Activated CD4-positive, alpha-beta memory T cell treated with anti-CD3 and anti-CD28 coated beads for 36 hours (primary cell): ENCODE measurements at regions of chr9 and their contacts with region 1.

Region 1: DNA sequence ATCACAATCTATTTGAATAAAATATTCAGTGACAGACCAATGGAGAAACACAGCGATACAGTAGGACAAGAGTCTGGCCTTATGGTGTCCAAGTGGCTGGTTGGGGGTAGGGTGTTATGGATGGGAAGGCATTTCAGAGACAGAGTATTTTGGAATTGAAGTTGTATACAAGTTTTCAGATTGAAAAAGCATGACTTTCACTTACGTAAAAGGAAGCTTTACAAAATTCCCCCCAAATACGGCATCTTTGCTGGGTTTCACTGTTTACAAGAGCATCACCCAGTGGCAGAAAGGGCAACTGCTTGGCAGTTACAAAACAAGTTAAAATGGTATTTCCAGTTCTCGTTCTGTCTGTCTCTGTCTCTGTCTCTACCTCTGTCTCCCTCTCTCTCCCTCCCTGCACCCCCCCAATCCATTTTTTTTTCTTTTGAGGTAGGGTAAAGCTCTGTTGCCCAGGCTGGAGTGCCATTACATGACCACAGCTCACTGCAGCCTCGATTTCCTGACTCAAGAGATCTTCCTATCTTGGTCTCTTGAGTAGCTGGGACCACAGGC is 86.2 kb downstream of the PTPN3 start:
- DNase-seq: peak; percentile 63
- H3K4me3 Mint-ChIP-seq: no peak overlapping the region
- H3K27ac Mint-ChIP-seq: peak overlapping the region; percentile 77
- H3K4me1 Mint-ChIP-seq: peaks cover 36% of the 10 kb centered on the region
- H3K27me3 Mint-ChIP-seq: peaks cover 21% of the 10 kb centered on the region

Region 2: DNA sequence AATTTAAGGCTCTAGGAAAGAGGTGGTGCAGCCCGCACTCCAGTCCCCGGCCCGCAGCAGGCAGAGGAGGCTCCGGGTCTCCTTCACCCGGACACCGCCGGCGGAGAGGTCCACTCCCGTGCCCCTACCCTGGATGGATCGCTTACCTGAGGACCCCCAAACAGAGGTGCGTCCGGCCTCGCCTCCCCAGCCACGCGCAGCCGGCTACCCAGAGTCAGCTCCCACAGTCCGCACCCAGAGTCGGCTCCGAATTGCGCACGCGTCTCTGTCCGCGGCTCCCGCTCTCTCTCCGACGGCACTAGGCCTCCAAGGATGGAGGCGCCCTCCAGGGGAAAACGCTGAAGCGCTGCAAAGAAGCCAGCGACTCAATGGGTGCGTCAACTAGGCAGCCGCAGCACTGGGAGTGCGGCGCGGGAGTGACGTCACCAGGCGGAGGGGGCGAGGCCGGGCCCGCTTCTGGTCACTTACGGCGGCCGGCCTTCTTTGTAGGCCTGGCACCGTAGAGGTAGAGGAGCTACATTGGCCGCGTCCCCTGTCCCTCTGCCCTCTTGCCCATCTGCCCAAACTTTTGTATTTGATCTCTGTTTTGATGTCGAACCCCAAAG is 478.1 kb before region 1 on chr9 and contains the start of gene ELP1:
- CTCF ChIA-PET with region 1: no interaction called
- POLR2A ChIA-PET with region 1: no interaction called
- intact Hi-C with region 1: loop called (anchors 10 kb)
- DNase-seq: peak; percentile 95
- H3K4me3 Mint-ChIP-seq: peak within 1 kb of the TSS; percentile 95
- H3K27ac Mint-ChIP-seq: peak within 1 kb of the TSS; percentile 92
- H3K4me1 Mint-ChIP-seq: peaks cover 25% of the 10 kb centered on the region
- H3K27me3 Mint-ChIP-seq: no peaks in the 10 kb centered on the region
- total RNA-seq, gene ELP1: 25.5 to 29.2 TPM

Region 3: DNA sequence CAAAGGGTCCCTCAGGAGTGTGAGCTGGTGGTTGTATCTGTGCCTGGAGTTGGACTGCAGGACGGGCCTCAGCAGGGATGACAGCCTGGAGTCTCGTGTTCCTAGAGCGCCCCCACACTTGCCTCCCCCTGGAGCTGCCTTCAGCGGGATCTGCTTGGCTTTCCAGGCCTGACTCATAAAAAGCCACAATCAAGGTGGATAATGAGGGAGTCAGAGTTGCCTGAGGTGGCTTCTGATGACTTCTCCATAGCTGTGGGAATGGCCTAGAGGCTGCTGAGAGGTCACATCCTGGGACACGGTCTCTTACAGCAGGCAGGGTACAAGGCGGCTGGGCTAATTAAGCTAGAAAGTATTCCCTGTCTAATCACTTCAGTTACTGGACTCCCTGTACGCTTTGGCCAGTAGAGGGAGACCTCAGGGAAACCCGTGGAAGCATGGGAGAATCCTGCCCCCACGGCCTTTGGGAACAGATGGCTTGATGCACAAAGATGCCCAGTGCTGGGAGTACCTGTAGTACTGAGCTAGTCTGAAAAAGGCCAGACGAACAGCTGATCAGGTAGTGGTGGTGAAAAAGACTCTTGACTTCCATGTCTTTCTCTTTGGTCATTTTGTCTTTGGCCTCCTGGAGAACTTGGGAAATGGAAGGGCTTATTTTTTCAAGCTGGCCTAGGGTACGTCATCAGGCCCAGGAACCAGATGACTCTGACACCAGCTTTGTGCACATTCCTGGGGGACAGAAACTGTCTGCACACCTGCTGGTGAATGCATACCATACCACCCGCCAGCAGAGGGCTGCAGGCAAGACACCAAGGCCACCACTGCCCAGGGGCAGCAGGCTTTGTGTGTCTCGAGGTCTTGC is 228.7 kb before region 1 on chr9:
- CTCF ChIA-PET with region 1: no interaction called
- POLR2A ChIA-PET with region 1: no interaction called
- intact Hi-C with region 1: loop called (anchors 5 kb)
- DNase-seq: peak; percentile 24
- H3K4me3 Mint-ChIP-seq: no peak overlapping the region
- H3K27ac Mint-ChIP-seq: no peak overlapping the region
- H3K4me1 Mint-ChIP-seq: peaks cover 11% of the 10 kb centered on the region
- H3K27me3 Mint-ChIP-seq: peaks cover 7% of the 10 kb centered on the region

Region 4: DNA sequence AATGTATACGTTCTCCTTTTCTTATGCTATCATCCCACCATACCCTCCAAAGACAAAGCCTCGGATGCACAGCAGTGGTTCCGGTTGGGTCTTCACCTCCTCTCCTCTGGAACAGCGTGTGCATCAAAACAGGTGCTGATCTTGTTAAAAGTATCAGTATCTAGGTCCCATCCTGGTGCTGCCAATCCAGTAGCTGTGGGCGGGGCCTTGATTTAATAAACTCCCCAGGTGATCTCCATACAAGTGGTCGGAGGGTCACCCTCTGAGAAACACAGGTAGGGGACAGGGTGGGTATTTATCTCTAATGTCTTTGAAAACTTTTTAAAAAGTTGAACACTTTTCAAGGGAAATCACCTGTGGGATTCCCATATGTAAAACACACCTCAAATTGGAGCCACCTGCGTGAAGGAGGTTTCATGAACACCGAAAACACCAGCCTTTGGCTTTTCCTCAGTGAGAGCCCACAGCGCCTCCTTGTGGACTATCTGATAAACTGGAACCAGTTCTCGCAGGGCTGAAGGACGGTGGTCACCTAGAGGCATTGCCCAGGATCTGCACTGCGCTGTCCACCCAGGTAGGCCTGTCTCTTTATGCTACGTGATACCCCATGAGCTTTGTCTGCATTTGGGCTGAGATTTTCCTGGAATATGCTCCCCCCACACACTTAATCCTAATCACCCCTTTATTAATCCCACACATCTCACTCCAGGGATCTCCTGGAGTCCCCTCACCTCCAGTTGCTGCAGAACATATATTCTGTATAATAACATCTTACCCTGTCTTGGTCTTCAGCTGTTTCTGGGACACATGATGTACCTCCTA is 10.5 kb before region 1 on chr9:
- CTCF ChIA-PET with region 1: interaction called, 19 read pairs
- POLR2A ChIA-PET with region 1: no interaction called
- intact Hi-C with region 1: loop called (anchors 1 kb)
- DNase-seq: peak; percentile 65
- H3K4me3 Mint-ChIP-seq: no peak overlapping the region
- H3K27ac Mint-ChIP-seq: no peak overlapping the region
- H3K4me1 Mint-ChIP-seq: peaks cover 11% of the 10 kb centered on the region
- H3K27me3 Mint-ChIP-seq: peaks cover 12% of the 10 kb centered on the region

Region 5: DNA sequence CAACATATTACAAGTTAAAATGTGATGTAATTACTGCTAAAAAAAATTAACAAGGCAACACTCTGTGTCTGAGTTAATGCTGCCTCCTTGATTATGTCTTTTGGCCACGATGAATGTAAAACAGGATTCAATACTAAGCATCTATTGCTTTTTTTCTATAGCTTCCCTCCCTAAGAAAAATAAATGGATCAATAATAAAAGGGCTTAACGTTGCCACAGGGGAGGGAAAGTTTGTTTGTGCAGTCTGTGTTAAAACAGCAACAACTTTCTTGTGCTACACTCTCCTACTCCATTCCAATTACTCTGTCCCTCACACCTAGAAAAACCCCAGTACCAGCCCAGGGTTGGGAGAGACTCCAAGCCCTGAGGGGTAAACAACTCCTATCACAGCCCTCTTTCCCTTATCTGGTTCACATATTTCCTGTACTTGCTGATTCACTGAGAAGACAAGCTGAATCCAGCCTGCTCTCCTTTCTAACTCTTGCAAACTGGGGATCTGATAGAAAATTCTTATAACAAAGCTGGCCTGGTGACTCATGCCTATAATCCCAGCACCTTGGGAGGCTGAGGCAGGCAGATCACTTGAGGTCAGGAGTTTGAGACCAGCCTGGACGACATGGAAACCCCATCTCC is 41.5 kb after region 1 on chr9:
- CTCF ChIA-PET with region 1: no interaction called
- POLR2A ChIA-PET with region 1: no interaction called
- intact Hi-C with region 1: no loop called
- DNase-seq: no peak
- H3K4me3 Mint-ChIP-seq: no peak overlapping the region
- H3K27ac Mint-ChIP-seq: no peak overlapping the region
- H3K4me1 Mint-ChIP-seq: peaks cover 1% of the 10 kb centered on the region
- H3K27me3 Mint-ChIP-seq: peaks cover 22% of the 10 kb centered on the region

Region 6: GRCh38 chr9:109918339-109919163 is 506.7 kb after region 1 on chr9:
- CTCF ChIA-PET with region 1: no interaction called
- POLR2A ChIA-PET with region 1: no interaction called
- intact Hi-C with region 1: loop called (anchors 1 kb)
- DNase-seq: peak; percentile 75
- H3K4me3 Mint-ChIP-seq: peak overlapping the region; percentile 58
- H3K27ac Mint-ChIP-seq: peak overlapping the region; percentile 97
- H3K4me1 Mint-ChIP-seq: peaks cover 29% of the 10 kb centered on the region
- H3K27me3 Mint-ChIP-seq: peaks cover 1% of the 10 kb centered on the region